IMR-90 (cell line): ENCODE measurements at regions of chr14 and their contacts with region 1.

Region 1: GRCh38 chr14:85528080-85528896 is 1.7 kb upstream of the FLRT2 start:
- DNase-seq: peak; percentile 90
- ATAC-seq: peak; percentile 28
- H3K4me3 ChIP-seq: peak overlapping the region; percentile 67
- H3K27ac ChIP-seq: peak overlapping the region; percentile 81; the same call in 1 of the 2 replicates
- H3K4me1 ChIP-seq: no peaks in the 10 kb centered on the region
- H3K27me3 ChIP-seq: no peaks in the 10 kb centered on the region
- CTCF ChIP-seq: peak; percentile 81
- POLR2A ChIP-seq: no peak
- RAD21 ChIP-seq: peak; percentile 95

Region 2: GRCh38 chr14:83994020-83994419 is 1534.3 kb before region 1 on chr14:
- CTCF ChIA-PET with region 1: no interaction called
- POLR2A ChIA-PET with region 1: no interaction called
- dilution Hi-C with region 1: no loop called
- in situ Hi-C with region 1: loop called (anchors 10 kb)
- intact Hi-C with region 1: loop called (anchors 5 kb)
- DNase-seq: peak; percentile 95
- ATAC-seq: peak; percentile 77
- H3K4me3 ChIP-seq: no peak overlapping the region
- H3K27ac ChIP-seq: no peak overlapping the region
- H3K4me1 ChIP-seq: peaks cover 15% of the 10 kb centered on the region
- H3K27me3 ChIP-seq: no peaks in the 10 kb centered on the region
- CTCF ChIP-seq: no peak
- POLR2A ChIP-seq: no peak
- RAD21 ChIP-seq: no peak

Region 3: DNA sequence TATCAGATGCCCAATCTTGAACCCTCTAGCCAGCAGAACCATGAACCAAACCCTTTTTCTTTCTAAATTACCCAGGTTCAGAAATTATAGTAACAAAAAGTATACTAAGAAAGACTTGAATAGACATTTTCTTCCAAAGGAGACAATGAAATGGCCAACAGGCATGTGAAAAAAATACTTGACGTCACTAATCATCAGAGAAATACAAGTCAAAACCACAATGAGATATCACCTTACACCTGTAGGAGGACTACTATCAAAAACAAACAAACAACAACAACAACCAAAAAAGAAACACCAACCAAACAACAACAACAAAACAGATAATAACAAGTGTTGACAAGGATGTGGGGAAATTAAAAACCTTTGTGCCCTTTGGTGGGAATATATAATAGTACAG is 1141.0 kb before region 1 on chr14:
- CTCF ChIA-PET with region 1: no interaction called
- POLR2A ChIA-PET with region 1: no interaction called
- dilution Hi-C with region 1: no loop called
- in situ Hi-C with region 1: no loop called
- intact Hi-C with region 1: loop called (anchors 5 kb)
- DNase-seq: no peak
- ATAC-seq: no peak
- H3K4me3 ChIP-seq: no peak overlapping the region
- H3K27ac ChIP-seq: no peak overlapping the region
- H3K4me1 ChIP-seq: 0 out of 2 replicates have a peak, but pooled peaks cover 3% of the 10 kb centered on the region
- H3K27me3 ChIP-seq: no peaks in the 10 kb centered on the region
- CTCF ChIP-seq: no peak
- POLR2A ChIP-seq: no peak
- RAD21 ChIP-seq: no peak

Region 4: DNA sequence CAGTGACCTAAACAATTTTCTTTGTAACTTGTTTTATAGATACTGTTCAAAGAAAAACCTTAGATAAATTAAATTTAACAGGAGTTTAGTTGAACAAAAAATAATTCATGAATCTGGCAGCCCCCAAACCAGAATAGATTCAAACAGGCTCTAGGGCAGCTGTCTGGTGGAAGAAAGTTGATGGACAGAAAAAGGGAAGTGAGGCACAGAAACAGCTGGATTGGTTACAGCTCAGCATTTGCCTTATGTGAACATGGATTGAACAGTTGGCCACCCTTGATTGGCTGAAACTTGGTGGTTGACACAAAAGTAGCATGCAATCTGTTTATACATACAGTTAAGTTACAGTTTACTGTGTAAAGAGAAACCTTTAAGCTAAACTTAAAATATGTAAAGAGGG is 952.6 kb before region 1 on chr14:
- CTCF ChIA-PET with region 1: no interaction called
- POLR2A ChIA-PET with region 1: no interaction called
- dilution Hi-C with region 1: no loop called
- in situ Hi-C with region 1: no loop called
- intact Hi-C with region 1: no loop called
- DNase-seq: no peak
- ATAC-seq: no peak
- H3K4me3 ChIP-seq: no peak overlapping the region
- H3K27ac ChIP-seq: no peak overlapping the region
- H3K4me1 ChIP-seq: no peaks in the 10 kb centered on the region
- H3K27me3 ChIP-seq: no peaks in the 10 kb centered on the region
- CTCF ChIP-seq: no peak
- POLR2A ChIP-seq: no peak
- RAD21 ChIP-seq: no peak

Region 5: DNA sequence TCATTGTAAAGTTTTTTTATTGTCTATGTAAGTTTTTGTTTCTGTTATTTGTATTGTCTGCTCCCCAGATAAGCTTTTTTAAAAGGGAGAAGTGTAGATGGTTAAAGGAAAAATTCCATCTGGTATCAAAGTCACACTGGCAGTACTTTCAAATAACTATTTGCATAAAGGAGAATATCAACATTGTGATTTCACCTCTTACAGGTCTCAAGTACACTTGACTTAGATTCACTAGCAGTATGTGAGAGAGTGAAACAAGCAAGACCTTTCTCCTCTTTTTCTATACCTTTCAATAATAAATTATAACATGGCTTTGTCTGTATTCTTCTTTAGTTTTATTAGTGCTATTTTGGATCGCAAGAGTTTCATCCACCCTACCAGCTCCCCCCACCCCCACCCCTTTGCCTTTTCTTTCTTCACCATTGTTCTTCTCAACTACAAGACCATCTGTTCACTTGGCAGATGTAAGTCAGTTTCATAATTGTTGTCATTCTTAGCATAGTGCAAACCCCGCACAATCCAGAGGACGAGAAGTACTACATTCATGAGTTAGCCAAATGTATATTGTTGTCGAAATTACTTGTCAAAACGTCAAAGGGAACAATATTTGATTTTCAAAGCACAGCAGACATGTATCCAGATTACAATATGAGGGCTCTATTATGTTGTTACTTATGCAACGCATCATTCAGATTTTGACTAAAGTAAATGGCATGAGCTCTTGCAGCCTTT is 601.0 kb before region 1 on chr14:
- CTCF ChIA-PET with region 1: no interaction called
- POLR2A ChIA-PET with region 1: no interaction called
- dilution Hi-C with region 1: no loop called
- in situ Hi-C with region 1: no loop called
- intact Hi-C with region 1: loop called (anchors 10 kb)
- DNase-seq: no peak
- ATAC-seq: no peak
- H3K4me3 ChIP-seq: no peak overlapping the region
- H3K27ac ChIP-seq: no peak overlapping the region
- H3K4me1 ChIP-seq: no peaks in the 10 kb centered on the region
- H3K27me3 ChIP-seq: no peaks in the 10 kb centered on the region
- CTCF ChIP-seq: no peak
- POLR2A ChIP-seq: no peak
- RAD21 ChIP-seq: no peak

Region 6: DNA sequence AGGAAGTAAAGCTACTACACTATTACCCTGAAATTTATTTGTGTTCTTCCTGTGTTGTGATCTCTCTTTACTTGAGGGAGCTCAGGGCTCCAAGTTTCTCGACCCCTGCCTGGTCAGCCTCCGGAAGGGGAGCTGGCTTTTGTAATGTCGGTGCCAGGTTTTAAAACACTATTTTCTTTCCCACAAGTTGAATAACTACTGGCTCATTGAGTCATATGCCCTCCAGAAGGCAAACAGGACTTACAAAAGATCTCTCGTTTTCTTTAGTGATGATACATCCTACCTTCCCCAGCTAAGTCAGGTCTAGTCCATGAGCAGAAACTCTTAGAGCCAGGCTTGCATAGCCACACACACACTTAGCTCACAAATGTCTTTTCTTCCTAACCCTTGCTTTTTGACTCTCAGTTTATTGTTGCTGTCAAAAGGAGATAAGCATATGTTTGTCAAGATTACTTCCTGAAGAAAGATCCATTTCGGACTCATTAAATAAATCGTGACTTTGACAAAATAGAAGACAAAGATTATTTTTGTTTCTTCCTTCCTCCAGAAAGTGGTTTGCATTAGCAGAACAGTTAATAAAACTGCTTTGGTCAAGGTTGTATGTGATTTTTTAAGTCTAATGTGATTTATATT is 208.2 kb before region 1 on chr14:
- CTCF ChIA-PET with region 1: interaction called, 4 read pairs
- POLR2A ChIA-PET with region 1: no interaction called
- dilution Hi-C with region 1: no loop called
- in situ Hi-C with region 1: no loop called
- intact Hi-C with region 1: loop called (anchors 10 kb)
- DNase-seq: peak; percentile 73
- ATAC-seq: peak; percentile 42; the same call in 1 of the 2 replicates
- H3K4me3 ChIP-seq: no peak overlapping the region
- H3K27ac ChIP-seq: no peak overlapping the region
- H3K4me1 ChIP-seq: peaks cover 2% of the 10 kb centered on the region; the same call in 1 of the 2 replicates
- H3K27me3 ChIP-seq: no peaks in the 10 kb centered on the region
- CTCF ChIP-seq: no peak
- POLR2A ChIP-seq: no peak
- RAD21 ChIP-seq: no peak

Region 7: DNA sequence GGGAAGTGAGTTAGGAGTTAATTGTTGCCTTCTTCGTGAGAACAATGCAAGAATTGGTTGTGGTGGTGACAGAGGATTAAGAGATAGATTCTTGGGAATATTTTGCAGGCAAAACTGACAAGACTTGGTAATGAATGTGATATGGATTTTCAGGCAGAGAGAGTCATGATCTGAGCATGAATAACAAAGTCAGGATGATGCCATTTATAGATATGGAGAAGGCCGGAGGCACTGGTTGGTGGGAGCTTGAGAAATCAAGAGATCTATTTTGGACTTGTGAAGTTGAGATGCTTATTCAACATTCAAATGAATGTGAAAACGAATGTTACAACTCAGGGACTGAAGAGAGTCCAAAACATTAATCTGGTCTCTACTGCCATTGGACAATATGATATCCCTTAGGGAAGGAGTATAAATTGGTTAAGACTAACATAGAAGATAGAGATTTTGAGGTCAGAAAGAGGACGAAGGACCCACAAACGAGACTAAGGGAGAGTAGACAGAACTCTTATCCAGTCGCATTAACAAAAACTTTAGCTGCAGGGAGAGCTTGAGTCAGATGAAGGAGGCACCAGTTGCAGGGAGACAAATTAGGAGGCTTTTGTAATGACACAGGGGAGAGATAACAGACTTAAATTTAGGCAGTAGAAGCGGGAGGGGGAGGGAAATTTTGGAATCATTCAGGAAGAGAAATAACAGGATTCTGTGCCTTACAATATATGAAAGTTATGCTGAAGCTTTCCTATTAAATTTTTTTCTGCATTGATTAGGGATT is 1374.1 kb after region 1 on chr14:
- CTCF ChIA-PET with region 1: no interaction called
- POLR2A ChIA-PET with region 1: no interaction called
- dilution Hi-C with region 1: no loop called
- in situ Hi-C with region 1: no loop called
- intact Hi-C with region 1: loop called (anchors 2 kb)
- DNase-seq: no peak
- ATAC-seq: no peak
- H3K4me3 ChIP-seq: no peak overlapping the region
- H3K27ac ChIP-seq: no peak overlapping the region
- H3K4me1 ChIP-seq: no peaks in the 10 kb centered on the region; the same call in 1 of the 2 replicates
- H3K27me3 ChIP-seq: no peaks in the 10 kb centered on the region
- CTCF ChIP-seq: no peak
- POLR2A ChIP-seq: no peak
- RAD21 ChIP-seq: no peak